ENCODE measurements at regions of chr13 and their contacts with region 1.

Region 1: DNA sequence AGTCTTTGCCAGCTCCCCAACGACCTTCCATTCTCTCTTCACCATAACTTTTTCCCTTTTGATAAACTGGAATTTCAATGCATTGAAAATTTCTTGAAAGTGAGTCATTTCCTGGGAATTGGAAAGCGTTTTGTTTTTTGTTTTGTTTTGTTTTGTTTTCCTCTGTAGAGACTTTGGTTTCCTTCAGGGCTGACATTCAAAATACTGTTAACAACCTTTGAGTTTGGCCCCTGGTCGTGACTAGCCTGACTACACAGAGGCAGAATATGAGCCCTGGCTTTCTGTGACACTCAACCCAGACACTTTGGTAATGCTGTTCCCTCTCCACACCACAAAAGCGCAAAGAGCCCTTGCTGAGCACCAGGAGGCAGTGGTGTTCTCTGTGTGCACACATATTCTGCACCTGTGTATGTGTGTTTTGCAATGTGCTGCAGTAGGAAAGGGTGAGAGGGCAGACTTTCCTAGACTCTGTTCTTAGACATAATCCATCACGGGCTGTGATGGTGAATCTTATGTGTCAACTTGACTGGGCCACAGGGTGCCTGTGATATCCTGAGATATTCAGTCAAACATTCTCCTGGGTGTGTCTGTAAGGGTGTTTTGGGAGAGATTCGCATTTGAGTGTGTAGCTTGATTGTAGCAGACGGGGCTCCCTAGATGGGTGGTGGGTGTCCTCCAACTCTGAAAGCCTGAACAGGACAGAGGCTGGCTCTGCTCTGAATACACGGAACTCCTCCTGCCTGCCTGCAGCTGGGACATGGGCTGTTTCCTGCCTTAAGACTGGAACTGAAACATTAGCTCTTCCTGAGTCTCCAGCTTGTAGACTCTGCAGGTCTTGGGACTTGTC is 29.5 kb upstream of the ANKRD10 start:
- DNase-seq: peak; percentile 70
- ATAC-seq: peak; percentile 98
- H3K4me3 ChIP-seq: no peak overlapping the region
- H3K27ac ChIP-seq: no peak overlapping the region
- H3K4me1 ChIP-seq: peaks cover 9% of the 10 kb centered on the region
- H3K27me3 ChIP-seq: no peaks in the 10 kb centered on the region
- CTCF ChIP-seq: peak; percentile 86

Region 2: GRCh38 chr13:111049802-111050538 is 105.6 kb after region 1 on chr13:
- CTCF ChIA-PET with region 1: no interaction called
- POLR2A ChIA-PET with region 1: no interaction called
- intact Hi-C with region 1: loop called (anchors 1 kb)
- DNase-seq: peak; percentile 35
- ATAC-seq: no peak
- H3K4me3 ChIP-seq: no peak overlapping the region
- H3K27ac ChIP-seq: no peak overlapping the region
- H3K4me1 ChIP-seq: no peaks in the 10 kb centered on the region
- H3K27me3 ChIP-seq: no peaks in the 10 kb centered on the region
- CTCF ChIP-seq: peak; percentile 73

Region 3: GRCh38 chr13:111413407-111414121 is 469.2 kb after region 1 on chr13:
- CTCF ChIA-PET with region 1: no interaction called
- POLR2A ChIA-PET with region 1: no interaction called
- intact Hi-C with region 1: no loop called
- DNase-seq: no peak
- ATAC-seq: no peak
- H3K4me3 ChIP-seq: no peak overlapping the region
- H3K27ac ChIP-seq: no peak overlapping the region
- H3K4me1 ChIP-seq: no peaks in the 10 kb centered on the region
- H3K27me3 ChIP-seq: peaks cover 95% of the 10 kb centered on the region
- CTCF ChIP-seq: no peak